Left ventricle myocardium superior (tissue), 1 donor: ENCODE measurements at regions of chr2 and their contacts with region 1.

Region 1: DNA sequence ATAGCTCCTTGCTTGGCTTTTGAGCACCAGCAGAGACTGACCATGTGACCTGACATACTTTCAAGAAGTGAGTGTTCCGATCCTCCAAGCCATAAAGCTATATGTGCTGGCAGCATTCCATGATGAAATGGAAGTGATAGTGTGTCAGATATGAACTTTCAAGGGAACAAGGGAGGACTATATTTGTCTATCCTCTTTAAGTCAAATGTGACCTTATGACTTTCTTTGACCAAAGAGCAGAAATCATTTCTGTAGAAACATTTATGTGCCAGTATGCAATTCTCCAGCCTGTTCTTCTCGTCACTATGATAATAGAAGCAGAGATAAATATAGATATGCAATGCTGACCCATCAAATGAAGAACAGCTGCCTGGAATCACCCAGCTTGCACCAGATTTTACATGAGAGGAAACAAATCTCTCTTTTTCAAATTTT is 14.4 kb downstream of the HYCC2 start:
- DNase-seq: no peak
- ATAC-seq: peak; percentile 17

Region 2: DNA sequence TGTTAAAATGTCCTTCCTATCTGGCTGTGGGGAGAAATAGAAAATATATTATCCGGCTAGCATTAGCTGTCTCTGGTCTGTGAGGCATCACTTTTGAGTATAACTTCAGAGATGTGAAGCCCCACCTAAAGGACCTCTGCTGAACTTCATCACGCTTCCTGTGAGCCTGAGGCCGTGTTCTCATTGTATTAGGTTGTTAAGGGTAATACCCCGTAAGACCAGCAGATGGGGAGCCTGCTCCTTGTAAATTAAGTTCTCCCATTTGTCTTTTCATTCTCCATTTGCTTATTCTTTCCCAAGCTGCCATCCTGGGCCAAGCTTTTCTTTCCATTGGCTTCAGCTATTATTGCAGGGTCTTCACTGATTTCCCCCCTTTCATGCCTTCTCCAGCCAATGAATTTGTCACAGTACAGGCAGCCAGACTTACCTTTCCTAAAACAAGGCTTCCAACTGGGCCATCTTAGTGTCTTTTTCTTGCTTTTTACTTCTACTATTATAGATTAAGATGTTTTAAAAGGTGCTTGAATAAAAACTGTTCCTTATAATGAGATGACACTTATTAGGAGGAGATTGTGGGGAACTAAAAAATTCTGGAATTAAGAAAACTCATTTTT is 155.5 kb before region 1 on chr2:
- intact Hi-C with region 1: loop called (anchors 10 kb)
- DNase-seq: no peak
- ATAC-seq: peak; percentile 78

Region 3: DNA sequence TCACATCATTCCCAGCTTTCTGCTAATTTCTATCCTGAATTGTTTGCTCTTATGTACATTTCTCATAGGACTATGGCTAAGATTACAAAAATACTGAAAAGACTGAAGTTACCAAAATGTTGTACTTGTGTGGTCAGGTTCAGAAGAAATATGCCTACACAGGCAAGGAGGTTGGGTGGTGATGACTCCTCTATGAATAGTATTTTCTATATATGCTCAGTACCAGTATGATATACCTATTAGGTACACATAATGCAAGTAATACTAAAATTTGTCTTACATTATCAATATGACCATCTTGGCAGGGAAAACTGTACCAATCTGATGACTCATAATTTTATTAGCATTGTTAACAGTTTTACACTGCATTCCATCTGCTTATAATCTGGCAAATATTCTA is 81.4 kb before region 1 on chr2:
- intact Hi-C with region 1: loop called (anchors 10 kb)
- DNase-seq: no peak
- ATAC-seq: no peak